ENCODE measurements at regions of chr3 and their contacts with region 1.

Region 1: GRCh38 chr3:58349792-58350626 is 17.3 kb downstream of the PXK start:
- DNase-seq: peak; percentile 37
- H3K4me3 Mint-ChIP-seq: peak overlapping the region; percentile 71
- H3K27ac Mint-ChIP-seq: peak overlapping the region; percentile 88
- H3K4me1 Mint-ChIP-seq: peaks cover 78% of the 10 kb centered on the region
- H3K27me3 Mint-ChIP-seq: no peaks in the 10 kb centered on the region

Region 2: GRCh38 chr3:58366699-58367098 is 16.7 kb after region 1 on chr3:
- intact Hi-C with region 1: no loop called
- DNase-seq: no peak
- H3K4me3 Mint-ChIP-seq: no peak overlapping the region
- H3K27ac Mint-ChIP-seq: no peak overlapping the region
- H3K4me1 Mint-ChIP-seq: peaks cover 37% of the 10 kb centered on the region
- H3K27me3 Mint-ChIP-seq: no peaks in the 10 kb centered on the region

Region 3: DNA sequence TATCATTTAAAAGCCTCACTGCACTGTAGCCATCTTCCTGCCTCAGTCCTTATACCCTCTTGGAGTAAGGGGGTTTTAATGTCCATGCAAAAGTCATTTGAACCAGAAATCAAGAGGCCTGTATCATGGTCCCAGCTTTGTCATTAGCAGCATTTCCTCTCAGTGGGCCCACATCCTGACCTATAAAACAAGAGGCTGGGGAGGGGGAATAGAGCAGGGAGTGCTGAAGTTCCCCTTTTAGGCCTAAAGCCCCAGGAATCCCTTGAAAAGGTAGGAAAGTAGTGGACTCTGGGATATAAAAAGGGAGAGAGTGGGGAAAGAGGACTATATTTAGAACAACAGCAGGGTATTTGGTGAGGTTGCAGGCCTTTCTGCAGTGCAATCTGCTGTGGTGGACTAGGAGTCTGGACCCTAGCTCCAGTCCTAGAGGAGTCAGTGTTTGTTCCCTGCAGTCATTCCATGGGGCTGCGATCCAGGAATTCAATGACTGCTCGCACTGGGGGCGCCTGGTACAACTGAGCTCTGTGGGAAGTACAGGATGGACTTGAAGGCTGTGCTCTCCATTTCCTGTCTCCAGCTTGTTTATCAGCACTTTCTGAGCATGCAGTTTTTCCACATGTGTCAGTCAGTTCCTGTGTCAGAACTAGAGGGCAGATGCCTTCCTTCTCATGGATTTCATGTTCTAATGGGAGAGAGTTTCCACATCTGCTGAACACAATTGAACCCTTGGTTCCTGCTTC is 36.8 kb after region 1 on chr3:
- intact Hi-C with region 1: loop called (anchors 5 kb)
- DNase-seq: no peak
- H3K4me3 Mint-ChIP-seq: peak overlapping the region; percentile 19
- H3K27ac Mint-ChIP-seq: peak overlapping the region; percentile 81
- H3K4me1 Mint-ChIP-seq: peaks cover 40% of the 10 kb centered on the region
- H3K27me3 Mint-ChIP-seq: no peaks in the 10 kb centered on the region